CD4-positive, alpha-beta T cell (primary cell): ENCODE measurements at regions of chr13 and their contacts with region 1.

Region 1: DNA sequence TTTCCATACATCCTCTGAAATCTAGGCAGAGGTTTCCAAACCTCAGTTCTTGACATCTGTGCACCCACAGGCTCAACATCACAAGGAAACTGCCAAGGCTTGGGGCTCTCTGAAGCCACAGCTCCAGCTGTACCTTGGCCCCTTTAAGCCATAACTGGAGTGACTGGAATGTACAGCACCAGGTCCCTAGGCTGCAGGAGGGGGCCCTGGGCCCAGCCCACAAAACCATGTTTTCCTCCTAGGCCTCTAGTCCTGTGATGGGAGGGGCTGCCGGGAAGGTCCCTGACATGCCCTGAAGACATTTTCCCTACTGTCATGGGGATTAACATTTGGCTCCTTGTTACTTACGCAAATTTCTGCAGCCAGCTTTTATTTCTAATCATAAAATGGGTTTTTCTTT is 1093.0 kb upstream of the PCDH9 start:
- DNase-seq: no peak
- ATAC-seq: no peak
- H3K4me3 ChIP-seq: no peak overlapping the region
- H3K4me3 Mint-ChIP-seq: no peak overlapping the region
- H3K27ac ChIP-seq: no peak overlapping the region
- H3K27ac Mint-ChIP-seq: no peak overlapping the region
- H3K4me1 ChIP-seq: no peaks in the 10 kb centered on the region
- H3K4me1 Mint-ChIP-seq: no peaks in the 10 kb centered on the region
- H3K27me3 ChIP-seq: no peaks in the 10 kb centered on the region
- H3K27me3 Mint-ChIP-seq: no peaks in the 10 kb centered on the region
- CTCF ChIP-seq: no peak

Region 2: GRCh38 chr13:67726979-67727378 is 596.1 kb before region 1 on chr13:
- CTCF ChIA-PET with region 1: no interaction called
- POLR2A ChIA-PET with region 1: no interaction called
- intact Hi-C with region 1: loop called in 1 of 2 experiments (anchors 5 kb)
- DNase-seq: no peak
- ATAC-seq: no peak
- H3K4me3 ChIP-seq: no peak overlapping the region
- H3K4me3 Mint-ChIP-seq: no peak overlapping the region
- H3K27ac ChIP-seq: no peak overlapping the region
- H3K27ac Mint-ChIP-seq: no peak overlapping the region
- H3K4me1 ChIP-seq: no peaks in the 10 kb centered on the region
- H3K4me1 Mint-ChIP-seq: no peaks in the 10 kb centered on the region
- H3K27me3 ChIP-seq: no peaks in the 10 kb centered on the region
- H3K27me3 Mint-ChIP-seq: no peaks in the 10 kb centered on the region
- CTCF ChIP-seq: no peak